ENCODE measurements at regions of chr13 and their contacts with region 1.

Region 1: DNA sequence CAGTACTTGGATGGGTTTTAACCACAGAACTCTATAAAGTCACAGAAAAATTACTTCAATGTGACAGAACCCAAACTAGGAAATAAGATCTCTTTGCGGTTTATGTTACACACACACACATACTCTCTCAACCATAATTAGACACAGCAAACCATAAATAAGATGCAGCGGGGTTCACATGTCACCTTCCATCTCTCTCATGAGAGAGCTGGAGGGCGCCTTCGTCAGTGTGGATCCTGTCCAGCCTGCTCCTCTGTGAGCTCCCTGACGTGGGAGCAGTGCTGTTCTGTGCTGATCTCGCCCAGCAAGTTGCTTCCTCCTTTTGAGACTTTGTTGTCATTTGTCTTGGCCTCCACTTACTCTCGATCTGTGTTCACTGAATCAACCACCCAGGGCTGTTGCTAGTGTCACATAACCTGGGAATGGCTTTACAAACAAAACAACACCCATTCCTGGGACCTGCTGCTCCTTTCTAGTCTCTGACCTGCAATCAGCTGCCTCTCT is 204.9 kb upstream of the KL start:
- DNase-seq: no peak
- H3K4me3 Mint-ChIP-seq: no peak overlapping the region
- H3K27ac Mint-ChIP-seq: no peak overlapping the region
- H3K4me1 Mint-ChIP-seq: no peaks in the 10 kb centered on the region
- H3K27me3 Mint-ChIP-seq: no peaks in the 10 kb centered on the region
- CTCF ChIP-seq: no peak

Region 2: GRCh38 chr13:32609428-32609827 is 201.9 kb before region 1 on chr13:
- CTCF ChIA-PET with region 1: no interaction called
- POLR2A ChIA-PET with region 1: no interaction called
- intact Hi-C with region 1: no loop called
- DNase-seq: no peak
- H3K4me3 Mint-ChIP-seq: no peak overlapping the region
- H3K27ac Mint-ChIP-seq: no peak overlapping the region
- H3K4me1 Mint-ChIP-seq: peaks cover 6% of the 10 kb centered on the region
- H3K27me3 Mint-ChIP-seq: no peaks in the 10 kb centered on the region
- CTCF ChIP-seq: no peak

Region 3: DNA sequence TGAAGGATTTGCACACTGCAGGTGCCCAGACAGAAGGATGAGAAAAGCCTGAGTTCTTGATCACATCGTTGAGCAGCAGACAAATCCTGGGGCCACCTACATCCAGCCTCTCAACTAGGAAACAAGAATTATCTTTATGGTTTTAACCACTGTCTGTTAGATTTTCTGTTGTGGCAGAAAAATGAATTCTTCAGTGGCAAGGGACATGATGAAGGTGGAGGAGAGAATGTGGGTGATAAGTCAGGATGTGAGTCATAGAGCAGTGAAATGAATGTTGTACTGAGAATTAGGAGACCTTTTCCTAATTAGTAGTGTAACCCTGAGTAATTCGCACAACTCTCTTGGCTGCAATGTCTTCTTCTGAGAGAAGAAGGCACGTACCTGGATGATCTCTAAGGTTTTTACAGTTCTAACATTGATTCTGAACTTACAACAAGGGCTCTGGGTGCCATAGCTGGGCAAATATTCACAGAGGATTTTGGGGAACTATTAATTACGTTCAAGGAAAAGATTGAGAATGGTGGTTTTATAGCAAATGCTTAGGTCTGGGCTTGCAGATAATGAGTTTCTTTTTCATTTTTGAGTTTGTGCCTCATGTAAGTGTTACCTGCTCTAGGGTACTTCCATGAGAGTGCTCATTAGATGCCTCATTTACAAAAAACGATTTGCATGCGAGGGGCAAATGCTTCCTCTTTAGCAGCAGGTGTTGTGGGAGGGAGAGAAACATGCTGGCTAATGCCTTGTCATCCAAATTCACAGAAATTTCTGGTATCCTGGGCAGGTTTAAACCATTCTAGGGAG is 93.9 kb after region 1 on chr13:
- CTCF ChIA-PET with region 1: no interaction called
- POLR2A ChIA-PET with region 1: no interaction called
- intact Hi-C with region 1: loop called (anchors 10 kb)
- DNase-seq: peak; percentile 49
- H3K4me3 Mint-ChIP-seq: no peak overlapping the region
- H3K27ac Mint-ChIP-seq: no peak overlapping the region
- H3K4me1 Mint-ChIP-seq: peaks cover 35% of the 10 kb centered on the region
- H3K27me3 Mint-ChIP-seq: no peaks in the 10 kb centered on the region
- CTCF ChIP-seq: no peak